AG04450 (cell line): ENCODE measurements at regions of chr10 and their contacts with region 1.

Region 1: GRCh38 chr10:78972947-78973900 is 95.5 kb upstream of the ZMIZ1 start:
- DNase-seq: peak; percentile 78
- H3K4me3 ChIP-seq: peak overlapping the region; percentile 49
- H3K27ac ChIP-seq: peak overlapping the region; percentile 96
- H3K27me3 ChIP-seq: peaks cover 2% of the 10 kb centered on the region
- CTCF ChIP-seq: no peak

Region 2: DNA sequence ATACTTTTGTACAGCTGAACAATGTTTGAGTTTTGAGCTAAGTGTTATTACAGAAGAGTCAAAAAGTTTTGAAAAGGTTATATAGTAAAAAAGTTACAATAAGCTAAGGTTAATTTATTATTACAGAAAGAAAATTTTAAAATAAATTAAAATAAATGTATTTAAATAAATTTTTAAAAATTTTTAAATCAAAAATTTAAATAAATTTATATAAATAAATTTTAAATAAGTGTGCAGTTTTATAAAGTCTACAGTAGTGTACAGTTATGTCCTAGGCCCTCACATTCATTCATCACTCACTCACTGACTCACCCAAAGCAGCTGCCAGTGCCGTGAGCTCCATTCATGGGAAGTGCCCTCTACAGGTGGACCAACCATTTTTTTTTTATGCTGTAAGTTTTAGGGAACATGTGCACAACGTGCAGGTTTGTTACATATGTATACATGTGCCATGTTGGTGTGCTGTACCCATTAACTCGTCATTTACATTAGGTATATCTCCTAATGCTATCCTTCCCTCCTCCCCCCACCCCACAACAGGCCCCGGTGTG is 367.3 kb before region 1 on chr10:
- CTCF ChIA-PET with region 1: no interaction called
- POLR2A ChIA-PET with region 1: no interaction called
- DNase-seq: no peak
- H3K4me3 ChIP-seq: no peak overlapping the region
- H3K27ac ChIP-seq: no peak overlapping the region
- H3K27me3 ChIP-seq: peaks cover 5% of the 10 kb centered on the region
- CTCF ChIP-seq: no peak

Region 3: DNA sequence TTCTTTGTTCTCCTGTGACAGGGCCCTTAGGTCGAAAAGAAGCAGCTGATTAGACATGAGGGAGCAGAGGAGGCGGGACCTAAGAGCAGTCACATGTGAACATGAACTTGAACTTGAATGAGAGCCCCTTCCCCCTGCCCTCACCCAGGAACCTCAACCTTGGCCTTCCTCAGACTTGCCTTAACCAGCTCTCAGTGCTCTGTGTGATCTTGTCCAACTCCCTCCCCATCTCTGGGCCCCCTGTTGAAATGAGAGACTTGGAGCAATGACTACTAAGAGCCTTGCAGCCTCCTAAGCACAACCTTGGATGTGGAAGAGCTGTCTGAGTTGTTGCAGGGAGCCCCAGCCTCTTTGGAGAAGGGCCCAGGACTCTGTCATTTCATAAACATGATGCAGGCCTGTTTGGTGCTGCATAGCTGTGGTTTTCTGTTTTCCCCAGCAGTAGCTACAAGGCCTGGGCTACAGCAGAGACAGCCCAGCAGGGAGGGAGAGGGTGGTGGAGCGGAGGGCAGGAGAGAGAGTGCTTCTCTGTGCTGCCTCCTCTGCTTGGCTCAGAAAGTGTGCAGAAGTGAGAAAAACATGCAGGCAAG is 28.4 kb before region 1 on chr10:
- CTCF ChIA-PET with region 1: interaction called, 4 read pairs
- POLR2A ChIA-PET with region 1: interaction called, 22 read pairs
- DNase-seq: peak; percentile 95
- H3K4me3 ChIP-seq: no peak overlapping the region
- H3K27ac ChIP-seq: peak overlapping the region; percentile 78
- H3K27me3 ChIP-seq: peaks cover 4% of the 10 kb centered on the region
- CTCF ChIP-seq: peak; percentile 12; the same call in 1 of the 2 replicates

Region 4: GRCh38 chr10:79067241-79068202 is 94.3 kb after region 1 on chr10:
- CTCF ChIA-PET with region 1: interaction called, 7 read pairs
- POLR2A ChIA-PET with region 1: interaction called, 10 read pairs
- DNase-seq: peak; percentile 84
- H3K4me3 ChIP-seq: peak overlapping the region; percentile 65
- H3K27ac ChIP-seq: peak overlapping the region; percentile 61
- H3K27me3 ChIP-seq: peaks cover 2% of the 10 kb centered on the region
- CTCF ChIP-seq: peak; percentile 44